Mammary epithelial cell (primary cell): ENCODE measurements at regions of chr7 and their contacts with region 1.

Region 1: GRCh38 chr7:1555809-1556540 is at the start of gene TMEM184A:
- DNase-seq: peak; percentile 83
- H3K4me3 ChIP-seq: peak within 1 kb of the TSS in 2 of 3 experiments; percentile 17 to 21
- H3K27ac ChIP-seq: peak within 1 kb of the TSS; percentile 56
- H3K4me1 ChIP-seq: peaks cover 44% of the 10 kb centered on the region
- H3K27me3 ChIP-seq: no peaks in the 10 kb centered on the region
- CTCF ChIP-seq: peak; percentile 48 to 87
- total RNA-seq, gene TMEM184A: 9.2 to 15.1 TPM

Region 2: GRCh38 chr7:1459522-1459892 is 96.5 kb before region 1 on chr7:
- CTCF ChIA-PET with region 1: no interaction called
- dilution Hi-C with region 1: no loop called
- in situ Hi-C with region 1: no loop called
- intact Hi-C with region 1: loop called (anchors 5 kb)
- DNase-seq: peak; percentile 98
- H3K4me3 ChIP-seq: peak overlapping the region; percentile 91 to 96 (median 95)
- H3K27ac ChIP-seq: no peak overlapping the region
- H3K4me1 ChIP-seq: peaks cover 64% of the 10 kb centered on the region
- H3K27me3 ChIP-seq: no peaks in the 10 kb centered on the region
- CTCF ChIP-seq: no peak

Region 3: DNA sequence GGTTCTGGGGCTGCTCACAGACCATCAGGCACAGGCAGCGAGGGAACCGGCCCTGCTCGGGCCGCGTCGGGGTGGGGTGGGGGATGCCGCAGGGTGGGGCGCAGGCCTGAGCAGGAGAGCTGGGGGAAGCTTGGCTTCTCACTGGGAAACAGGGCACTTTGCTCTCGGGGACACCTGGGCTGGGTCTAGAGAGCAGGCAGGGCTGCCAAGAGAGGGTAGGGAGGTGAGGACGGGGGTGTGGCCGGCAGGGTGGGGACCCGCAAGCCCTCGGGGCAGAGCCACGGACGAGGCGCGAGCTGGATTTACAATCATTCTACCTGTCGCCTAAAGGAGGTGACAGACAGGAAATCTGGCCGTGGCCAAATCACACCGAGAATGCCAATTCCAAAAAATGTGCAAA is 62.8 kb before region 1 on chr7:
- CTCF ChIA-PET with region 1: no interaction called
- dilution Hi-C with region 1: no loop called
- in situ Hi-C with region 1: no loop called
- intact Hi-C with region 1: no loop called
- DNase-seq: no peak
- H3K4me3 ChIP-seq: no peak overlapping the region
- H3K27ac ChIP-seq: no peak overlapping the region
- H3K4me1 ChIP-seq: no peaks in the 10 kb centered on the region
- H3K27me3 ChIP-seq: no peaks in the 10 kb centered on the region
- CTCF ChIP-seq: no peak

Region 4: DNA sequence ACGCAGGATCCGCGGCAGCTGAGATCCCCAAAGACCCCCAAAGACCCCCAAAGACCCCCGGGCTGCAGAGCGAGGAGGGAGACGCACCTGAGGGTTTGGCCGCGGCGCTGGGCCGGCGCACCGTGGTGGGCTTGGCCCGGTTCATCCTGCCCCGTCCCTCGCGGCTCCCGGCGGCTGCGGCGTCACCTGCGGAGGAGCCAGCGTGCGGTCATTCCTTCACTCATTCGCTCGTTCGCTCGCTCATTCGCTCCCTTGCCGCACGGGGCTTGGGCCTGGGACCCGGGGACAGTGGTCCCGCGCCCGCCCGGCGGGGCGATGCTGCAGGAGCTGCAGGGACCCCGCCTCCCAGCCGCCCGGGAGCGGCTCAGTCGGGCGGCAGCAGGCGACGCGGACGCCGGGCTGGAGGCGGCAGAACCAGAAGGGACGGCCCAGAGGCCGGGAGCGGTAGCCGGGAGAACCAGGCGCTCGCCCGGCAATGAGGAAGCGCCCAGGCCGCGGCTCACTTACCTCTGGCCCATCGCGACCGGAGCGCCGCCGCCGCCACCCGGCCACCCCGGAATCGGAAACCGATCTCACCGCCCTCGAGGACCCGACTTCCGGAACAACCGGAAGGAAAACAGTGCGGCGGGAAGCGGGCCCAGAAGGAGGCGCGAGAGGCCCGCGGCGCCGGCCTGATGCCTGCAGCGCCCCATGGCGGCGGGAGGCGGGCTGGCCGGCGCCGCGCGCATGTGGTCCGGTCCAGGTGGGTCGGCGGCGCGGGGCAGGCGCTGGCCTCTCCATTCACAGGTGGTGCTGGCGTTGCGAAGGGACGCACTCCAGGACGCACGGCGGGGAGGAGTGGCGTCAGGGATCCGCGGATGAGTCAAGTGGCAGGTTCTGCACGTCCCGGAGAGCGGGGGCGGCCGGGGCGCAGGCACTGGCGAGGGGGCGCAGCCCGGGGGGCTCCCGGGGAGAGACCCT is 51.9 kb before region 1 on chr7 and contains the start of gene INTS1:
- CTCF ChIA-PET with region 1: no interaction called
- dilution Hi-C with region 1: no loop called
- in situ Hi-C with region 1: no loop called
- intact Hi-C with region 1: loop called (anchors 1 kb)
- DNase-seq: peak; percentile 94
- H3K4me3 ChIP-seq: peak within 1 kb of the TSS; percentile 83 to 95 (median 95)
- H3K27ac ChIP-seq: peak within 1 kb of the TSS; percentile 53
- H3K4me1 ChIP-seq: peaks cover 16% of the 10 kb centered on the region
- H3K27me3 ChIP-seq: no peaks in the 10 kb centered on the region
- CTCF ChIP-seq: peak; percentile 58 to 71
- total RNA-seq, gene INTS1: 51.3 to 81.1 TPM

Region 5: GRCh38 chr7:1512781-1513656 is 43.0 kb before region 1 on chr7:
- CTCF ChIA-PET with region 1: no interaction called
- dilution Hi-C with region 1: no loop called
- in situ Hi-C with region 1: no loop called
- intact Hi-C with region 1: loop called (anchors 1 kb)
- DNase-seq: peak; percentile 90
- H3K4me3 ChIP-seq: peak overlapping the region in 1 of 3 experiments; percentile 16
- H3K27ac ChIP-seq: no peak overlapping the region
- H3K4me1 ChIP-seq: peaks cover 14% of the 10 kb centered on the region
- H3K27me3 ChIP-seq: no peaks in the 10 kb centered on the region
- CTCF ChIP-seq: no peak

Region 6: DNA sequence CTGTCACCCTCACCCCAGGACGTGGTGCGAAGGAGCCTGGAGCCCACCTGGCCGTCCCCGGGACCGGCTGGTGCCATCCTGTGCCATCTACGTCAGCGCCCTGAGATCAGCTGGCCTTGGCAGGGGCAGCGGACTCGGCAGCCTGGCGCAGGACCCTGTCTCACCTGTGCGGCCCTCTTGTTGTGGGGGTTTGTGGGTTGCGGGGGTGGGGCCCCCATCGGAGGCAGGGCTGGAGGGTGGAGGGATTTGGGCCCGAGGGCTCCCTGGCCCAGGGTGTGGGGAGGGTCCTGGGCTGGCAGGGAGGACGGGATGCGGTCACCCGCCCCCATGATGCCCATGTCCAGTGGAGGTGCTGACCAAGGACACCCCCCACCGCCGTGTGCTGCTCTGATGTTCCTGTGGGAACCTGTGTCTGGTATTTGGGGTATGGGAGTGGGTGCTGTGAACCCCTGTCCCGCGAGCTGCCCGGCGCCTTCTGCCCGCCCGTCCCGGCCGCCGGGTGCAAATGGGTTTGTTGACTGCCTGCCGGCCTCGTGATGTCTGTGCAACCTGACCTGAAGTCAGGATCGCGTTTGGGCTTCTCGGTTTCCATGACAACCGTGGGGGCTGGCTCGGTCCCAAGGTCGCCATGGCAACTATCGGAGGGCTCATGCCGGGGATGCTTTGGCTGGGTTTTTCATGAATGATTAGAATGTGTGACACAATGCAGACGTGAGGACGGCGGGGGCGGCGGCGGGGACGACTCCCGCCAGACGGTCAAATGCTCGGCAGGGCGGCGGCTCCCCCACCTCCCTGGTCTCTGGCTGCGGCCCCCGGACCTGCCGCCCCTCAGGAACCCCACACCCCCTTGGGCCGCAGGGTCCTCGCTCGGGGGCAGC is 18.2 kb before region 1 on chr7:
- CTCF ChIA-PET with region 1: interaction called, 5 read pairs
- dilution Hi-C with region 1: no loop called
- in situ Hi-C with region 1: no loop called
- intact Hi-C with region 1: loop called (anchors 2 kb)
- DNase-seq: peak; percentile 48
- H3K4me3 ChIP-seq: peak overlapping the region; percentile 11 to 49 (median 47)
- H3K27ac ChIP-seq: peak overlapping the region; percentile 76
- H3K4me1 ChIP-seq: peaks cover 29% of the 10 kb centered on the region
- H3K27me3 ChIP-seq: no peaks in the 10 kb centered on the region
- CTCF ChIP-seq: no peak

Region 7: DNA sequence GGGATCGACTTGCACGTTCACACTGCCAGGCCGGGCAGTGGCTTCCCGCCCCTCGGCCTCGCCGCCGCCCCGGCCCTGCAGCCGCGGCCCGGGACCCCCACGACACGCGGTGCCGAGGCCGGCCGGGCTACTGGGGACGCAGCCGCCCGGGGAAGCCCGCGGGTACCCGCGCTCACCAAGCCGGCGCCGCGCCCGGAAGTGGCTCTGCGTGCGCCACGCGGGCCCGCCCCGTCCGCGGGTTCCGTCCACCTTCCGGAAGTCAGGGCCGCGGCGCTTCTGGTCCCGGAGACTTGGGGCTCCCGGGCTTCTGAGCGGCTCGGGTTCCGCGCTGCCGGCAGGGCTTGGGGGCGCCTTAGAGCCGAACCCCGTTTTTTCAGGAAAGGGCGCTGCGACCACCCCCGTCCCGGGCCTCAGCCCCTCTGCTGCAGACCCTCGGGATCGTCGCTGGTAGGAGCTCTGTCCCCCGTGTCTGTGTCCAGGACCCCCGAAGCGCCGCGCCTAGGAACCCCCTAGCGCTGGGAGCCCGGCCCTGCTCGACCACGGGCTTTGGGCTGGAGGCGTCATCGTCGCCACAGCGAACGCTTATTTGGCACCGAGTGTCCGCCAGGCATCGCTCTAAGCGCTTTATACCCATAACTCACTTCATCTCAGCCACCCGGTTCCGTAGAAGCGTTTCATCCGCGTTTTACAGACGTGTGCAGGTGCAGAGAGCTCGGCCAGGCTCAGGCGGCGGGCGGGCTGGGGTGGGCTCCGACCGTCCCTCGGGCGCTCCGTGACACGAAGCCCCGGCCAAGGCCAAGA is 14.1 kb after region 1 on chr7 and contains the start of gene PSMG3:
- CTCF ChIA-PET with region 1: no interaction called
- dilution Hi-C with region 1: no loop called
- in situ Hi-C with region 1: no loop called
- intact Hi-C with region 1: loop called (anchors 1 kb)
- DNase-seq: peak; percentile 88
- H3K4me3 ChIP-seq: peak within 1 kb of the TSS; percentile 84 to 97 (median 93)
- H3K27ac ChIP-seq: peak within 1 kb of the TSS; percentile 67
- H3K4me1 ChIP-seq: peaks cover 27% of the 10 kb centered on the region
- H3K27me3 ChIP-seq: no peaks in the 10 kb centered on the region
- CTCF ChIP-seq: peak in 1 of 2 donors; percentile 33
- total RNA-seq, gene PSMG3: 25.8 to 34.0 TPM

Region 8: GRCh38 chr7:1693991-1694524 is 138.1 kb after region 1 on chr7:
- CTCF ChIA-PET with region 1: no interaction called
- dilution Hi-C with region 1: no loop called
- in situ Hi-C with region 1: no loop called
- intact Hi-C with region 1: no loop called
- DNase-seq: no peak
- H3K4me3 ChIP-seq: no peak overlapping the region
- H3K27ac ChIP-seq: no peak overlapping the region
- H3K4me1 ChIP-seq: peaks cover 10% of the 10 kb centered on the region
- H3K27me3 ChIP-seq: no peaks in the 10 kb centered on the region
- CTCF ChIP-seq: no peak